ENCODE measurements at regions of chr4 and their contacts with region 1.

Region 1: GRCh38 chr4:183848805-183849204 is 56.3 kb upstream of the STOX2 start:
- DNase-seq: no peak
- H3K4me3 ChIP-seq: no peak overlapping the region
- H3K27ac ChIP-seq: no peak overlapping the region
- H3K4me1 ChIP-seq: peaks cover 10% of the 10 kb centered on the region
- H3K27me3 ChIP-seq: peaks cover 4% of the 10 kb centered on the region
- CTCF ChIP-seq: no peak

Region 2: GRCh38 chr4:183876268-183876934 is 27.6 kb after region 1 on chr4:
- CTCF ChIA-PET with region 1: no interaction called
- dilution Hi-C with region 1: no loop called
- in situ Hi-C with region 1: no loop called
- intact Hi-C with region 1: loop called (anchors 1 kb)
- DNase-seq: peak; percentile 81
- H3K4me3 ChIP-seq: peak overlapping the region; percentile 33 to 48 (median 41)
- H3K27ac ChIP-seq: no peak overlapping the region
- H3K4me1 ChIP-seq: peaks cover 8% of the 10 kb centered on the region
- H3K27me3 ChIP-seq: no peaks in the 10 kb centered on the region
- CTCF ChIP-seq: no peak

Region 3: DNA sequence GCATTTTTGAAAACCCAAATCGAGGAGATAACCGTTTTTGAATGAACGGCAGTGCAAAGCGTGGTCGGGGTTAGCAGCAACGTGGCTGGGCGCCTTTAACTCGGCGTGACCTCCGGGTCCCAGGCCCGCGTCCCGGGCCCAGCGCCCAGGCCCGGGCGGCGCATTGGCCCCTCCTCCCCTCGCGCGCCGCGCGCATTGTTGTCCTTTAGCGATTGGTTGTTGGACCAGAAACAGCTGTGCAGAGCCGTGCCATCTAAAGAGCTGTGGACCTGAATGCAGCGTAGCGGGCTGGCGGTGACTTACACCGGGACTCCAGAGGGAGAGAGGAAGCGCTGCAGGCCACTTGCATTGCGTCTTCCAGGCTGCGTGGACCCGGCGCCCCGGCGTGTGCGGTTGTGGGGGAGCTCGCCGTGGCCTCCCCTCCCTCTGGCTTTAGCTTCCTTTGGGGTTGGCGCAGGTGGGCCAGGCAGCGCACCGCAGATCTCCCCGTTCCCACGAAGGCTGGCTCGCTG is 56.3 kb after region 1 on chr4 and contains the start of gene STOX2:
- CTCF ChIA-PET with region 1: no interaction called
- dilution Hi-C with region 1: no loop called
- in situ Hi-C with region 1: no loop called
- intact Hi-C with region 1: loop called (anchors 2 kb)
- DNase-seq: peak; percentile 53
- H3K4me3 ChIP-seq: peak within 1 kb of the TSS; percentile 36 to 50 (median 47)
- H3K27ac ChIP-seq: no peak within 1 kb of the TSS
- H3K4me1 ChIP-seq: peaks cover 14% of the 10 kb centered on the region
- H3K27me3 ChIP-seq: peaks cover 21% of the 10 kb centered on the region
- CTCF ChIP-seq: no peak
- total RNA-seq, gene STOX2: 2.5 to 15.5 TPM

Region 4: DNA sequence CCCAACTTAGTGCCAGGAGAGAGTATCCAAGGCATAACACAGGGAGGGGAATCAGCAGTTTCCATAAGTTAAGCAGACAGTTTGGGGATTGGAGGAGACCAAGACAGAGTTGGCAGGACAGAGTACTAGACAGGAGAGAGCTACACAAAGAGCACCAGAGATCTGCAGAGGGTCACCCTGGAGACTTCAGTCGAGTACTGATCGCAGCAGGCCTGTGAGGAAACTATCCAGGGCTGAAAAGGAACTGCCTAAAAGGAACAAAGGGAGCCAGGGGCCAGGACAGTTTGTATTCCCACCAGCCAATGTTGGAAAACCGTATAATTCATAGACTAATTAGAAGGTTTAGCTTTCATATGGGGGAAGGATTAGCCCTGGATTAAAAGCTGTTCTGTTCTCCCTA is 449.4 kb after region 1 on chr4:
- CTCF ChIA-PET with region 1: no interaction called
- dilution Hi-C with region 1: no loop called
- in situ Hi-C with region 1: no loop called
- intact Hi-C with region 1: no loop called
- DNase-seq: no peak
- H3K4me3 ChIP-seq: no peak overlapping the region
- H3K27ac ChIP-seq: no peak overlapping the region
- H3K4me1 ChIP-seq: no peaks in the 10 kb centered on the region
- H3K27me3 ChIP-seq: no peaks in the 10 kb centered on the region
- CTCF ChIP-seq: no peak

Measured in mammary epithelial cell (primary cell).